ENCODE measurements at regions of chr5 and their contacts with region 1.

Region 1: DNA sequence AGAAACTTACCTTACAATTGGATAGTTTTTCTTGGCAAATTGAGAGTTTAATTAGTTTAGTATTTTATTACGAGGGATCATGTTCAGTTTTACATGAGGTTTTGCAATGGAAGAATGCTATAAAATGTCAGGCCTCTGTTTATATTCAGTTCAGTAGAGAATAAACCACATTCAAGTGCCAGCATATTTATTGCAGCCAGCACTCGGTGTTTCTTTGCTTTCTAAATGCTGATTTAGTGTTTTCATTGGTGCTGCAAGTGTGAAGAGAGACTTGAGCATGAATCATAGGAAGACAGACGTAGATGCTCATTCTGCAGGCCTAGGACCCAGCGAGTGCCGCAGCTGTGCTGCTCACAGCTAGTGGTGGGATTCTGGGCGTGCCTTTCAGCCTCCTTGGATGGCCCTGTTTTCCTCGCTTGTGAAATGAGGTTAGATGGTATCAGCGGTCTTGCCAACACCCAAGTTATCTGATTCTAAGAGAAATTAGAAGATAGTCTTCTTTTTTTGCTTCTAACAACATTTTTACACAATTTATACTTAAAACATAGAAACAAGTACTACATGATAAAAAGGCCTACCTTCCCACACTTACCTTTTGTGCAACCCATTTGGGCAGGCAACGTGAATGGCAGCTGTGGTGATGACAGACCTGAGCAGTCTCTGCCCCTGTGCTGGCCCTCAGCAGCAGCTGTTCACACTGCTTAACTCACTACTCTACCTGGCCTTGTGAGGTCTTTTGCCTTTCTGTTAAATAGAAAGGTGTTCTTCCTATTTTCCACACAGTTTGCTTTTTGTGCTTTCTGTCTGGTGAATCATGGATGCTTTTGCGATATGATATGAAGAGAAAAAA is 26.8 kb upstream of the TNFAIP8 start:
- DNase-seq: no peak
- ATAC-seq: no peak
- H3K4me3 ChIP-seq: no peak overlapping the region
- H3K4me3 Mint-ChIP-seq: no peak overlapping the region
- H3K27ac ChIP-seq: peak overlapping the region in 1 of 2 donors; percentile 79
- H3K27ac Mint-ChIP-seq: peak overlapping the region; percentile 86
- H3K4me1 ChIP-seq: peaks cover 79 to 84% of the 10 kb centered on the region in 2 donors
- H3K4me1 Mint-ChIP-seq: peaks cover 88% of the 10 kb centered on the region
- H3K27me3 ChIP-seq: no peaks in the 10 kb centered on the region
- H3K27me3 Mint-ChIP-seq: no peaks in the 10 kb centered on the region
- CTCF ChIP-seq: no peak

Region 2: DNA sequence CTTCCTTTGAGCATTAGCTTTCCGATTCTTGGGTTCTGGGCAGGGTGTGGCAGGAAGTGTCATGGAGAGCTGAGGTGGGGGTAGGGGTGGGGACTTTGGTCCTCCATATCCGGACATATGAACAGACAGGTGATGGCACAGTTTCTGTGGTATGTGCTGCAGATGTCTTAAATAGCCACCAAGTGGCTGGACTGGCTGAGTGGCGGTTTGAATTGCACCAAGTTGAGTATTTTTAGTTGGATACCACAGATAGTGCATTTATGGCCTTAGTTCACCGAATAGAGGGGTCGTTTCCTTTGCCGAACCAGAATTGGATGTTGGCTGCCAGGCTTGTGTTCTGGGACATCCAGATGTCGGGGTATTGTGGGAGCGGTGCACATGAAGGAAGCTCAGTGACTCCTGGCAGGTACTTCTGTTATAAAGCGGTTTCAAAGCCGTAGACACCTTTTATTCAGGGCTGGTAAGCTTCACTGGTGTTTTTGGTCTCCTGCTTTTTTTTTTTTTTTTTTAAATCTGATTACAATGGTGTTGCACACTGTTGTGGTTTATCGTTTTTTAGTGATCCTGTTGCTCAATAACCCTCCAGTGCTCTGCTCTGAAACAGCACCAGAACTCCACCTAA is 11.7 kb after region 1 on chr5:
- CTCF ChIA-PET with region 1: interaction called, 5 read pairs
- POLR2A ChIA-PET with region 1: interaction called, 3 read pairs
- intact Hi-C with region 1: loop called (anchors 1 kb)
- DNase-seq: peak; percentile 68
- ATAC-seq: peak; percentile 22
- H3K4me3 ChIP-seq: peak overlapping the region in 4 of 5 experiments; percentile 5 to 45 (median 22)
- H3K4me3 Mint-ChIP-seq: peak overlapping the region; percentile 85
- H3K27ac ChIP-seq: peak overlapping the region; percentile 87 to 91
- H3K27ac Mint-ChIP-seq: peak overlapping the region; percentile 95
- H3K4me1 ChIP-seq: peaks cover 95 to 96% of the 10 kb centered on the region in 2 donors
- H3K4me1 Mint-ChIP-seq: peaks cover 94% of the 10 kb centered on the region
- H3K27me3 ChIP-seq: no peaks in the 10 kb centered on the region
- H3K27me3 Mint-ChIP-seq: no peaks in the 10 kb centered on the region
- CTCF ChIP-seq: no peak

Region 3: GRCh38 chr5:119367502-119368237 is 38.7 kb after region 1 on chr5:
- CTCF ChIA-PET with region 1: interaction called, 209 read pairs
- POLR2A ChIA-PET with region 1: no interaction called
- intact Hi-C with region 1: loop called (anchors 5 kb)
- DNase-seq: peak; percentile 49
- ATAC-seq: peak; percentile 55
- H3K4me3 ChIP-seq: peak overlapping the region in 3 of 5 experiments; percentile 9 to 40 (median 13)
- H3K4me3 Mint-ChIP-seq: peak overlapping the region; percentile 68
- H3K27ac ChIP-seq: peak overlapping the region; percentile 67 to 79
- H3K27ac Mint-ChIP-seq: peak overlapping the region; percentile 92
- H3K4me1 ChIP-seq: peaks cover 82 to 88% of the 10 kb centered on the region in 2 donors
- H3K4me1 Mint-ChIP-seq: peaks cover 83% of the 10 kb centered on the region
- H3K27me3 ChIP-seq: no peaks in the 10 kb centered on the region
- H3K27me3 Mint-ChIP-seq: no peaks in the 10 kb centered on the region
- CTCF ChIP-seq: no peak